ENCODE measurements at regions of chr1 and their contacts with region 1.

Region 1: GRCh38 chr1:54585181-54586066 is 37.4 kb downstream of the ACOT11 start:
- DNase-seq: no peak
- H3K4me3 ChIP-seq: no peak overlapping the region
- H3K27ac ChIP-seq: no peak overlapping the region
- H3K4me1 ChIP-seq: peaks cover 0 to 33% (median 25%) of the 10 kb centered on the region in 3 donors
- H3K27me3 ChIP-seq: no peaks in the 10 kb centered on the region
- CTCF ChIP-seq: no peak

Region 2: GRCh38 chr1:53992085-53992874 is 593.1 kb before region 1 on chr1:
- intact Hi-C with region 1: no loop called
- DNase-seq: no peak
- H3K4me3 ChIP-seq: no peak overlapping the region
- H3K27ac ChIP-seq: no peak overlapping the region
- H3K4me1 ChIP-seq: no peaks in the 10 kb centered on the region
- H3K27me3 ChIP-seq: no peaks in the 10 kb centered on the region
- CTCF ChIP-seq: no peak

Region 3: DNA sequence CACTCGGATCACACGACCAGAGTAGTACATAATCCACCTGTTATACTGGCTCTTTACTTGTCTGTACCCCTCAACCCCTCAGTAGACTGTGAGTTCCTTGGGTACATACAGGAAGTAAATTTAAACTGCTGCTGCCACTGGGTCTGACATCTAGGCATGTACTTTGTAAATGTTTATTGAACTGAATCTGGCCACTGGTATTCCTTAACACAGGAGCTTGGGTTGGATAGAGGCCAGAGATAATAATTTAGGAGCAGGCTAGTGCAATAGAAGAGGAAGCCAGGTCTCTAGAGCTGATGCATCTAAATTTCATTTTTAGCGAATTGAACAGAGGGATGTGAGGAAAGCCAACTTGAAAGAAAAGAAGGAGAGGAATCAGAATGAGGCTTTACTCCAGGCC is 142.6 kb after region 1 on chr1:
- intact Hi-C with region 1: loop called (anchors 5 kb)
- DNase-seq: no peak
- H3K4me3 ChIP-seq: no peak overlapping the region
- H3K27ac ChIP-seq: no peak overlapping the region
- H3K4me1 ChIP-seq: no peaks in the 10 kb centered on the region
- H3K27me3 ChIP-seq: no peaks in the 10 kb centered on the region
- CTCF ChIP-seq: no peak